Activated naive CD4-positive, alpha-beta T cell treated with anti-CD3 and anti-CD28 coated beads, Interleukin-2, amount 10 ng/mL, durations not matched to agents 7 days and 5 days (primary cell): ENCODE measurements at regions of chr2 and their contacts with region 1.

Region 1: DNA sequence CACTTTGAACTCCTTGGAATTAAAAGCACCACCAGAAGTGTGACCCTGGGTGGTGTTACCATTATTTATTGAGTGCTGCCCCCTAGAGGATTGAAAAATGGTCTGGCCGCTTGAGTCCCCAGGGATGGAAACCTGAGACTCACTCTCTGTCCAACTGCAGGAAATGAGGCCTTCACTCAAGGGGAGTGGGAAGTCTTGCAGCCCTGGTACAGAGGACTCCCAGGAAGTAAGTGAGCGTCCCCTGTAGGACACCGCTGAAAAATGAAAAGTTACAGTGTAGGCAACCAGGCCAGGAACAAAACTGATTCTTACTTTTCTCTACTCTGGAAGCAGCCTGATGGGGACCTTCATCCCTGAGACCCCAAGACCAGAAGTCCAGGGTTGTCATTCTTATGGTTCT is 2.2 kb upstream of the NRP2 start:
- DNase-seq: peak; percentile 61
- H3K4me3 Mint-ChIP-seq: no peak overlapping the region
- H3K27ac Mint-ChIP-seq: no peak overlapping the region
- H3K4me1 Mint-ChIP-seq: peaks cover 44% of the 10 kb centered on the region
- H3K27me3 Mint-ChIP-seq: peaks cover 60% of the 10 kb centered on the region

Region 2: GRCh38 chr2:204871231-204871953 is 808.7 kb before region 1 on chr2:
- CTCF ChIA-PET with region 1: interaction called, 44 read pairs
- DNase-seq: no peak
- H3K4me3 Mint-ChIP-seq: no peak overlapping the region
- H3K27ac Mint-ChIP-seq: peak overlapping the region; percentile 34
- H3K4me1 Mint-ChIP-seq: peaks cover 61% of the 10 kb centered on the region
- H3K27me3 Mint-ChIP-seq: no peaks in the 10 kb centered on the region

Region 3: GRCh38 chr2:205660521-205661124 is 19.4 kb before region 1 on chr2:
- CTCF ChIA-PET with region 1: interaction called, 28 read pairs
- DNase-seq: peak; percentile 71
- H3K4me3 Mint-ChIP-seq: no peak overlapping the region
- H3K27ac Mint-ChIP-seq: peak overlapping the region; percentile 68
- H3K4me1 Mint-ChIP-seq: peaks cover 43% of the 10 kb centered on the region
- H3K27me3 Mint-ChIP-seq: peaks cover 4% of the 10 kb centered on the region